ENCODE measurements at regions of chr3 and their contacts with region 1.

Region 1: DNA sequence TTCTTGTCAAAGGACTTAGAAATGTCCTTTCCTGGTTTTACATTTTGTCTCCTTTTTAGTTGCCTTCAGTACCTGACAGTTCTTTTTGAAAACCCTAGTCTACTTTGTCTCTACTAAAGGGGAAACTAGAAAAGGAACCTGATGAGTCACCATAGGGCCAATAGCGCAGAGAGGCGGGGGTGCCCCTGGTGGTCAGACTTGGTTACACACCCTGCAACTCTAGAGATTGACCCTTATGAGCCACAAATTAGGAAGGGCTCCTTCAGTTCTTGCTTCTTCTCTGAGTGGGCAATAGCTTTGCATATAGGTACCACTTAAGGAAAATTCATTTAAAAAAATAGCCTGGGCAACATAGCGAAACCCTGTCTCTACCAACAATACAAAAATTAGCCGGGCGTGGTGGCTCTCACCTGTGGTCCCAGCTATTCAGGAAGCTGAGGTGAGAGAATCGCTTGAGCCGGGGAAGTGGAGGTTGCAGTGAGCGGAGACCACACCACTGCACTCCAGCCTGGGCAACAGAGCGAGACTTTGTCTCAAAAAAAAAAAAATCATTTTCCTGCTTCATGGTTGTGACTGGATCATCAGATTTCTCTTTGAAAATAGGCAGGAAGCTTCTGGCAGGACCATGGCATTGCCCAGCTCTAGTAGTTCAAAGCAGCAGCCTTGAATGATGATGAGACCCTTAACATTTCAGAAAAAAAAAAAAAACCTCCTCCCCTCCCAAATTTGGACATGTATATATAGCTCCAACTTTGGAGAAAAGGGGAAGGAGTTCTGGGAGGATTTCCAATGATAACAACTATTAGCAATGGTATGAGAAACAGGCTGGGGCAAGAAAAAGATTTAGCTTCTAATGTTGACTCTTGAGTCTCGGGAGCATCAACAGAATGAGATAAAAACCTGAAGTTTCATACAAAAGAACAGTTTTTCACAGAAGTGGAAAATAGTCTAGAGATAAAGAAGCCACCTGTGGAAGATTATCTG is 45.2 kb upstream of the RASA2 start:
- DNase-seq: peak; percentile 84
- H3K4me3 Mint-ChIP-seq: no peak overlapping the region
- H3K27ac Mint-ChIP-seq: peak overlapping the region; percentile 81
- H3K4me1 Mint-ChIP-seq: peaks cover 31% of the 10 kb centered on the region
- H3K27me3 Mint-ChIP-seq: no peaks in the 10 kb centered on the region

Region 2: DNA sequence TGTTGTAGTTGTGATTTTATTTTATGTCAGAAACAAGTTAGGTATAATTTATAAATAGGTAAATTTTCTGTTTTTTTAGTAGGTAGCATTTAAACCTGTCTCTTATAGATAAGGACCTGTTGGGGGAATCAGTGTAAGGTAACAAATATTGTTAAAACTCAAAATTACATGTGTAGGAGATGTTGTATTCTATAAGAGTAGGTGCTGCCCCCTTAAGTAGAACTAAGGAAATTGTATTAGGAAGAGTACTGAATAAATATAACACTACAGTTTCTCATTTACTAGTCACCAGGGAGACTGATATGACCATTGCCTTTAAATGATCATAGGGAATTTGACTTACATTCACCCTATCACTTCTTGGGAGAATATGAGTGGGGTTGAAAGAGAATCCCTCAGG is 468.8 kb before region 1 on chr3:
- CTCF ChIA-PET with region 1: no interaction called
- POLR2A ChIA-PET with region 1: no interaction called
- DNase-seq: no peak
- H3K4me3 Mint-ChIP-seq: no peak overlapping the region
- H3K27ac Mint-ChIP-seq: no peak overlapping the region
- H3K4me1 Mint-ChIP-seq: peaks cover 14% of the 10 kb centered on the region
- H3K27me3 Mint-ChIP-seq: no peaks in the 10 kb centered on the region

Region 3: GRCh38 chr3:141303481-141304223 is 138.0 kb before region 1 on chr3:
- CTCF ChIA-PET with region 1: interaction called, 47 read pairs
- POLR2A ChIA-PET with region 1: interaction called, 4 read pairs
- DNase-seq: peak; percentile 60
- H3K4me3 Mint-ChIP-seq: no peak overlapping the region
- H3K27ac Mint-ChIP-seq: no peak overlapping the region
- H3K4me1 Mint-ChIP-seq: peaks cover 37% of the 10 kb centered on the region
- H3K27me3 Mint-ChIP-seq: peaks cover 5% of the 10 kb centered on the region

Region 4: DNA sequence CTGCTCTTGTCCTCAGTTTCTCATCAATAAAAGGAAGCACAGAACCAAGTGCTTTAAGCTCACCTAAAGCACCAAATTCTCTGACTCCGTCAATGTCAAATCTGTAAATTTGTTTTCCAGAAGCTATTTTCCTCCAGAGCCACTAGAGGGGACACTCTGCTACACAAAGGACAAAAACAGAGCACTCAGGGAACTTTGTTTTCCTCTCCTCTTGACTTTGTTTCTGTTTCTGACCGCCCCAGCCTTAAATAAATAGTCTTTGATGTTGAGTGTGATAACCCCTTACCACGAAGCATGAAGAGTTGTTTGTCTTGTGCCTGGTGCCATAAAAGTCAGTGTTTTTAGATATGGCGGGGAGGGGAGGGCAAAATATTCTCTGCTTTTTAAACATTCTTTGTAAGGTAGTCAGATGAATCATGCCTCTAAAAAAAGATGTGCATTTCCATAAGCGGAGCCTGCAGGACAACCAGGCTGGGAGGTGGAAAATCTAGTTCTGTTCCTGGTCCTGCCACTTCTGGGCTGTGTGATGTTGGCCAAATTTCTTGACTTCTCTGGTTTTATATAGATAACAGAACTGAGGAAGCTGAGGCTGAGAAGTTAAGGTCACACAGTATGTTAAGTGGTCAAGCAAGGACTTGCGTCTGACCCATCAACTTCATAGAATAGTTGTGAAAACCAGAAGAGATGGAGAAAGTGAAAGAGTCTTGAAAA is 80.6 kb before region 1 on chr3:
- CTCF ChIA-PET with region 1: interaction called, 58 read pairs
- POLR2A ChIA-PET with region 1: interaction called, 3 read pairs
- DNase-seq: no peak
- H3K4me3 Mint-ChIP-seq: peak overlapping the region; percentile 19
- H3K27ac Mint-ChIP-seq: no peak overlapping the region
- H3K4me1 Mint-ChIP-seq: peaks cover 10% of the 10 kb centered on the region
- H3K27me3 Mint-ChIP-seq: peaks cover 3% of the 10 kb centered on the region

Region 5: GRCh38 chr3:141386611-141387111 is 55.0 kb before region 1 on chr3:
- CTCF ChIA-PET with region 1: interaction called, 10 read pairs
- POLR2A ChIA-PET with region 1: interaction called, 11 read pairs
- DNase-seq: no peak
- H3K4me3 Mint-ChIP-seq: peak overlapping the region; percentile 63
- H3K27ac Mint-ChIP-seq: peak overlapping the region; percentile 65
- H3K4me1 Mint-ChIP-seq: peaks cover 37% of the 10 kb centered on the region
- H3K27me3 Mint-ChIP-seq: no peaks in the 10 kb centered on the region

Region 6: DNA sequence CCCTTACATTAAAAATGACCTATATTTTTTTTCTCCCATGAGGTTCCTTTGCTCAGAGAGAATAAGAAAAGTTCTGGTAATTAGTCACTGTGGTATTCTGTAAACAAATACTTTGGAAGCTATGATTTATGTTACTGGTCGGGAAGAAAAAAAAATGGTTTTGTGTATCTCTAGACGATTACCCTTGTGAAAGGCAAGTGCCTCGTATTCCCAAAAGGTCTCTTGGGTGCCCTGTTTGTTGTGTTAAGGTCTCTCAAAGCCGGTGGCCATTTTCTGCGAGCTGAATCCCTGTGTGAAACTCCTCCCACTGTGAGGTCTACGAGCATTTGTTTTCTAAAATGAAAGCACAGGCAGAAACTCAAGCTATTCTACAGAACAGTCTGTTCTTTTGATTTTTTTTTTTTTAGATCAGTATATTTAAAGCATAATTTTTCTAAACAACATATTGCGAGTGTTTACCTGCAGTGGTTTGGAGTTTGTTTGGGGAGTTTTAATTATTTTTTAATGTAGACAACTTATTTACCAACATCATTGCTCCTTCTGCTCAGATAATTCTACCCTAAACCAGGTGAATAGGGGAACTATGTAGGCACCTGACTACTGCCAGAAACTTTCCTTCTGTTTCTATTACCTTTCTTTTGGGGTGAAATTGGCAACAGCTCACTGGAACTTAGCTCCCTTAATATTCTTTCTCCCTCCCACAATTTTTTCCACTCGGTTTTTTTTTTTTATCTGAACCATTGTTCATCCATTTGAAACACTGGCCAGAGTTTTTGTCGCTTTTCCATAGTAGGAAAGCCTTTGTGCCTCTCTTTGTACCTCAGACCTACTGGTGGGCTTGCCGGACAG is 29.4 kb before region 1 on chr3:
- CTCF ChIA-PET with region 1: interaction called, 11 read pairs
- POLR2A ChIA-PET with region 1: interaction called, 20 read pairs
- DNase-seq: peak; percentile 69
- H3K4me3 Mint-ChIP-seq: peak overlapping the region; percentile 78
- H3K27ac Mint-ChIP-seq: peak overlapping the region; percentile 99
- H3K4me1 Mint-ChIP-seq: peaks cover 72% of the 10 kb centered on the region
- H3K27me3 Mint-ChIP-seq: no peaks in the 10 kb centered on the region

Region 7: DNA sequence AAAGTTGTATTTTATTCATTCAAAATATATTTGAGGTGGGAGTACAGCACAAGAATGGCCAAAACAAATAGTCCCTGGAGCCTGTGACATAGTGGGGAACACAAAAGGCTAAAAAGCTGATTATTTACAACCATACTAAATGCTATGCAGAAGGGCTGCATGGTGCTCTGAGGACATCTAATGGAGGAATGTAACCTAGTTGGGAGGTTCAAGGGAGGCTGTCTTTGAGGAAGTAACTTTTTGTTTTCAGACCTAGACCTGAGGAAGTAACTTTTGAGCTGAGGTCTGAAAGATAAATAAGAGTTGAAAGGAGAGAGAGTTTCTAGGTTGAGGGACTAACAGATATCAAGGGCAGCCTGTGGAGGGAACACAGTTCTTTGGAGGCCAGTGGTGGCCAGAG is 10.4 kb after region 1 on chr3:
- CTCF ChIA-PET with region 1: interaction called, 57 read pairs
- POLR2A ChIA-PET with region 1: interaction called, 4 read pairs
- DNase-seq: peak; percentile 57
- H3K4me3 Mint-ChIP-seq: no peak overlapping the region
- H3K27ac Mint-ChIP-seq: no peak overlapping the region
- H3K4me1 Mint-ChIP-seq: peaks cover 9% of the 10 kb centered on the region
- H3K27me3 Mint-ChIP-seq: no peaks in the 10 kb centered on the region

Region 8: DNA sequence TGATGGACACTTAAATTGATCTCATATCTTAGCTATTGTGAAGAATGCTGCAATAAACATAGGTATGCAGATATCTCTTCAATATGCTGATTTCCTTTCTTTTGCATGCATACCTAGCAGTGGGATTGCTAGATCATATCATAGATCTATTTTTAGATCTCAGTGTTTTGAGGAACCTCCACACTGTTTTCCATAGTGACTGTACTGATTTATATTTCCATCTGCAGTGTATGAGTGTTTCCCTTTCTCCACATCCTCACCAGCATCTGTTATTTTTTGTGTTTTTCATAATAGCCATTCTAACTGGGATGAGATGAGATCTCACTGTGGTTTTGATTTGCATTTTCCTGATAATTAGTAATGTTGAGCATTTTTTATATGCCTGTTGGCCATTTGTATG is 28.0 kb after region 1 on chr3:
- CTCF ChIA-PET with region 1: no interaction called
- POLR2A ChIA-PET with region 1: no interaction called
- DNase-seq: no peak
- H3K4me3 Mint-ChIP-seq: no peak overlapping the region
- H3K27ac Mint-ChIP-seq: no peak overlapping the region
- H3K4me1 Mint-ChIP-seq: peaks cover 3% of the 10 kb centered on the region
- H3K27me3 Mint-ChIP-seq: peaks cover 5% of the 10 kb centered on the region

Region 9: DNA sequence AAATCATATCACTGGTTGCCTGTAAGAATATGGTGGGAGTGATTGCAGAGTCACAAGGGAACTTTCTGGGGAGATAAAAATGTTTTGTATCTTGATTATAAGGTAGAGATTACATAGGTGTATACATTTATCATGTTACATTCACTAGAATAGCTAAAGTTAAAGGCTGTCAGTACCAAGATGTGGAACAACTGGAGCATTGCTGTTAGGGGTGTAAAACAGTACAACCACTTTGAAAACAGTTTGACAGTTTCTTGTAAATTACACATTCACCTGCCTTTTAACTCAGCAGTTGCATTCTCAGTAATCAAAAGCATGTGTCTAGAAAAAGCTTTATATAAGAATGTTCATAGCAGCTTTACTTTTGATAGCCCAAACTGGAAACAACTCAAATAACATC is 72.7 kb after region 1 on chr3:
- CTCF ChIA-PET with region 1: no interaction called
- POLR2A ChIA-PET with region 1: no interaction called
- DNase-seq: no peak
- H3K4me3 Mint-ChIP-seq: no peak overlapping the region
- H3K27ac Mint-ChIP-seq: no peak overlapping the region
- H3K4me1 Mint-ChIP-seq: peaks cover 28% of the 10 kb centered on the region
- H3K27me3 Mint-ChIP-seq: no peaks in the 10 kb centered on the region